ENCODE measurements at regions of chr21 and their contacts with region 1.

Region 1: GRCh38 chr21:45309069-45309986 is 21.6 kb upstream of the POFUT2 start:
- H3K4me3 ChIP-seq: no peak overlapping the region
- H3K27ac ChIP-seq: no peak overlapping the region
- H3K4me1 ChIP-seq: no peaks in the 10 kb centered on the region
- CTCF ChIP-seq: peak; percentile 78

Region 2: DNA sequence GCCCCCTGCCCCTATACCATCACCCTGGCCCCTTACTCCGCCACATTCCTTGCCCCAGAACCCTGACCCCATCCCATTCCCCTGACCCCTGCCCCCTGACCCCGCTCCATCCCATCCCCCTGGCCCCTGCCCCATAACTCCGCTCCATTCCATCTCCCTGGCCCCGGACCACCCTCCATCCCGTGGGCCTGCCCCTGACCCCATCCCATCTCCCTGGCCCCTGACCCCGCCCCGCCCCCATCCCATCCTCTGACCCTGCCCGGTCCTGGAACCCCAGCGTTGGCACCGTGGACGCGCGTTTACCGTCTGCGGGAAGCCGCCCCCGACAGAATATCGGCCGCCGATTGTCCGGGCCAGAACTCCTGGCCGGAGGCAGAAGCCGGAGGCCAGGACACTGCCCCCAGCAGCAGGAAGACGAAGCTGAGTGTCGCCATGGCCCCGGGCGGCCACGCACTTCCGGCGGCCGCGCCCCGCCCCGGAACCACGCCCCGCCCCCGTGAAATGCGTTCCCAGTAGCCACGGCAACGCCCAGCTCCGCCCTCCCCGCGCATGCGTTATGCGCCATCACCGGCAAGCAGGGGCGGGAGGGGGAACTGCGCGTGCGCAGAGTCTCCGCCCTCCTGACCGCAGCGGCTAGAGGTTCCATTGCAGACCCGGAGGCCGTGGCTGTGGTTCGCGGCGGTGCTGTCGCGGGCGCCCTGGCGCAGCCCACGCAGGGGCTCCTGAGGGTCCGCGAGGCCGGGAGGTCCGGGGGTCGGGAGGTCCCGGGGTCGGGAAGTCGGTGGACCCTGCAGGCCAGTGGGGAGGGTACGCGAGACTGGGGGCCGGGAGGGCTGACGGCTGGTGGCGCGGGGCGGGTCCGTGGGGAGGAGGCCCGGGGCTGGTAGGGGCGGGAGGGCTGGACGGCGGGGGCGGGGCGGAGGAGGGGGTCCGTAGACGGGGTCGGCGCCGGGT is 21.6 kb before region 1 on chr21 and contains the start of gene POFUT2:
- CTCF ChIA-PET with region 1: interaction called, 21 read pairs
- POLR2A ChIA-PET with region 1: interaction called, 6 read pairs
- H3K4me3 ChIP-seq: peak within 1 kb of the TSS; percentile 78
- H3K27ac ChIP-seq: no peak within 1 kb of the TSS; the same call in 1 of the 2 replicates
- H3K4me1 ChIP-seq: no peaks in the 10 kb centered on the region; the same call in 1 of the 2 replicates
- CTCF ChIP-seq: peak; percentile 43

Region 3: DNA sequence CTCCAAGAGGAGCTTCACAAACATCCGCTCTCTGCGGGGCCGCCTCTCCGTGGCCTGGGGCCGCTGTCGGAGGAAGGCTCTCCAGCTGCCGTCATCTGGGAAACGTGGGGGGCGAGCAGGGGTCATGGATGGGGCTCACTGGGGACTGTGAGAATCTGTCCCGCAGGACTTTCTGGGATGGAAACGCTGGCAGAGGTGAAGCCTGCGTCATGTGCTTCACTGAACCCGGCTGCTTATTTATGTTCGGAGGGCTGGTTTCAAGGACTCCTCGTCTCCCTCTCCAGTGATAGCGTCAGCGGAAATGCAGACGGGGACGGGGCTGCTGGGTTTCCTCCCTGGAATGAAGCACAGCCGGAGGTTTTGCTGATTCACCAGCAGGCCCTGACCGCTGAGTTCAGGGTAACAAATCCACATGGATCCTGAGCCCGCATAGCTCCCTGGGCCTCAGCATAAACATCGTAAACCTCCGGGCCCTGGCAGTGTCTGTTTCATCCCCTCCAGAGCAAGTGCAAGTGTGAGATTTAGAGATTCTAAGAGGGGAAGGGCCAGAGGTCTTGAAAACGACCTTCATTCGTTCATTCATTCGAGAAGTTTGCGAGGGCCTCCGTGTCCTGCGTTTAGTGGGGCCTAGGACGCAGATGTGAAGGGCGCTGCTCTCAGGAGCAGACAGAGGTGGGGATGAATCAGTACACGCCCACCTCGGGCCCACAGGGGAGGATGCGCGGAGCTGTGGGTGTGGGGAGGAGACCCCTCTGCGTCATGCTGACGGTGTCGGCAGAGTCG is 14.6 kb before region 1 on chr21:
- CTCF ChIA-PET with region 1: interaction called, 21 read pairs
- POLR2A ChIA-PET with region 1: interaction called, 6 read pairs
- H3K4me3 ChIP-seq: no peak overlapping the region
- H3K27ac ChIP-seq: peak overlapping the region; percentile 35
- H3K4me1 ChIP-seq: no peaks in the 10 kb centered on the region; the same call in 1 of the 2 replicates
- CTCF ChIP-seq: no peak

Region 4: GRCh38 chr21:45319461-45320211 is 10.3 kb after region 1 on chr21:
- CTCF ChIA-PET with region 1: interaction called, 23 read pairs
- POLR2A ChIA-PET with region 1: interaction called, 3 read pairs
- H3K4me3 ChIP-seq: no peak overlapping the region
- H3K27ac ChIP-seq: 0 out of 2 replicates have a peak overlapping the region, but pooled peaks have one; percentile 17
- H3K4me1 ChIP-seq: no peaks in the 10 kb centered on the region
- CTCF ChIP-seq: no peak

Region 5: DNA sequence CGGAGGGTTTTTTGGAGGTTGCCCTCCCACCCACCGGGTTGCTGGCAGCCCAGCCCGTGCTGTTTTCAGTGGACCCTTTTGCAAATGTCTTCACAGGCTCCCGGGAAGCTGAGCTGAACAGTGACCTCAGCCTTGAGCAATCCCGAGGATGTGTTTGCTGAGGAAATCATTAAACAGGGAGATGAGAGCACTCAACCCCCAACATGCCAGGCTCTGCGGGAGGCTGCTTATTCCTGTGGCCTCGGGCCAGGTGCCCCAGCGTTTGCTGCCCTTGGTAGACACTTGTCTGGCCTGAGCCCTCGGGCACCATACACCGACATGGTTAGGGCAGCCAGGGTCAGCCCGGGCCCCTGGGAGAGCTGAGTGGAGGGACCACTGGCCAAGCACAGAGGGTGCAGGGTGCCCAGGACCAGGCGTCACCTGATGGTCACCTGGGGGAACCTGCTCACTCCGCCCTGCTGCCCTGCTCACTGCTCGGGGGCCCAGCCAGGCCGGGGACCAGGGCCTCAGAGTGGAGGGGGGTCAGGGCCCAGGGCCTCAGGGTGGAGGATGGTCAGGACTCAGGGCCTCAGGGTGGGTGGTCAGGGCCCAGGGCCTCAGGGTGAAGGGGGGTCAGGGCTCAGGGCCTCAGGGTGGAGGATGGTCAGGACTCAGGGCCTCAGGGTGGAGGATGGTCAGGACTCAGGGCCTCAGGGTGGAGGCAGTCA is 20.9 kb after region 1 on chr21:
- CTCF ChIA-PET with region 1: interaction called, 18 read pairs
- POLR2A ChIA-PET with region 1: interaction called, 4 read pairs
- H3K4me3 ChIP-seq: no peak overlapping the region
- H3K27ac ChIP-seq: no peak overlapping the region
- H3K4me1 ChIP-seq: peaks cover 4% of the 10 kb centered on the region; the same call in 1 of the 2 replicates
- CTCF ChIP-seq: no peak

Region 6: GRCh38 chr21:45515241-45516060 is 206.1 kb after region 1 on chr21:
- CTCF ChIA-PET with region 1: no interaction called
- POLR2A ChIA-PET with region 1: no interaction called
- H3K4me3 ChIP-seq: no peak overlapping the region
- H3K27ac ChIP-seq: no peak overlapping the region
- H3K4me1 ChIP-seq: no peaks in the 10 kb centered on the region
- CTCF ChIP-seq: no peak

Measured in HEK293 (cell line).